Head of caudate nucleus (tissue), 42 donors: ENCODE measurements at regions of chr10 and their contacts with region 1.

Region 1: DNA sequence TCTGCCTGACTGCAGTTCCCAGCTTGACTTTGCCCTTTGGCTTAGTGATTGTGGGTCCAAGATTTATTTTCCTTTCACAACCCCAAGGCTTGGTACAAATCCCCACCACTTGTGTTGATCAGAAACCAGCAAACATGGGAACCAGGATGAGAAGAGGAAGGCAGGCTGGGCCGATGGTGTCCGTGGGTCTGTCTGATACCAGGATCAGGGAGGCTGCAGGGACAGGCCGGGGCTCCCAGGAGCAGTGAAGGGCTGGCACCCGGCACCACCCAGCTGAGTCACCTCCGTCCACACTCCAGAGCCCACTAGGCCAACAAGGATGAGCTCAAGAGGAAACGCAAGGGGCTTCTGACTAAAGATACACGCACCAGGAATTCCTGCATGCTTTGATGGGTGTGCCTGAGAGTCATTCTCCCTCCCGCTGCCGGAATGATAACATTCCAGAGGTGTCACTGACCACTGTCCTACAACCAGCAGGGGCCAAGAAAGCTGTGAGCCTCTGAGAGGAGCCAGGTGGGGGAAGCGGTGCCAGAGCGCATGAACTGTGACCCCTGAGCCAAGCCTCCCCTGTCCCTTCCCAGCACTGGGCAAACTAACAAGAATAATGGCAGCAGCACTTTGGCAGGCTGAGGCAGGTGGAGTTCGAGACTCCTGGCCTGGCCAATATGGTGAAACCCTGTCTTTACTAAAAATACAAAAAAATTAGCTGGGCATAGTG is 29.2 kb upstream of the PROSER2 start:
- DNase-seq: no peak

Region 2: GRCh38 chr10:11986593-11987216 is 192.8 kb after region 1 on chr10:
- intact Hi-C with region 1: loop called (anchors 10 kb)
- DNase-seq: peak; percentile 54 to 91 (median 81)

Region 3: DNA sequence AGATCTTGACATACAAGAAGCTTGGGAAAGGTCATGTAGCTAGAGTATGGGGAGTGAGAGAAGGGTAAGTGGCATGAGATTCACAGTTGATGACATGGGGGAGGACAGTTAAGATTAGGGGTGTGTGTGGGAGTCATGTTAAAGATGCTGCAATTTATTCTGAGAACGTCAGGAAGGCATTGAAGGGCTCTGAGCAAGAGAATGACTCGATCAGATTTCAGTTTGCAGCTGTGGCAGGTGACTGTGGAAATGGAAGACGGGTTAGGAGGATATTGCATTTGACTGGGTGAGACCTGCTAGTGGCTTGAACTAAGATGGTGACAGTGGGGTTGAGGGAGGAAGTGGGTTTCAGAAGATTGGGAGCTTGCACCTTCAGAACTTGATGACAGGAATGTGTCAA is 407.6 kb after region 1 on chr10:
- intact Hi-C with region 1: no loop called
- DNase-seq: peak in 21 of 42 donors; percentile 21 to 74 (median 46)